Posterior vena cava (tissue), 2 donors: ENCODE measurements at regions of chrX and their contacts with region 1.

Region 1: DNA sequence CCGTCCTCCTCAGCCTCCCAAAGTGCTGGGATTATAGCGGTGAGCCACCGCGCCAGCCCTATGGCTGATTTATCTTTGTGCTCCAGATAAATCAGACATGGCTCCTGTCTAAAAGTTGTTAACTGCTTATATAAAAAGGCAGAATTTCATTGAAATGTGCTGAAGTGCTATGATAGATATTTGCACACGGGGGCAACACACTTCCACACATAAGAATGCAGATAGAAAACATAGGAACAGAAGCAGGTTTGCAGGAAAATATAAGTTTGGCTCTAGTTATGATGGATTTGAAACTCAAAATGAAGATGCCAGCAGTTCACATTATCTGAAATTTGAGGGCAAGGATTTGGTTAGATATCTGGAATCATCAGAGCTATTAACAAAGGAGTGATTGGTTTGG is 163.1 kb upstream of the SLITRK2 start:
- DNase-seq: no peak

Region 2: DNA sequence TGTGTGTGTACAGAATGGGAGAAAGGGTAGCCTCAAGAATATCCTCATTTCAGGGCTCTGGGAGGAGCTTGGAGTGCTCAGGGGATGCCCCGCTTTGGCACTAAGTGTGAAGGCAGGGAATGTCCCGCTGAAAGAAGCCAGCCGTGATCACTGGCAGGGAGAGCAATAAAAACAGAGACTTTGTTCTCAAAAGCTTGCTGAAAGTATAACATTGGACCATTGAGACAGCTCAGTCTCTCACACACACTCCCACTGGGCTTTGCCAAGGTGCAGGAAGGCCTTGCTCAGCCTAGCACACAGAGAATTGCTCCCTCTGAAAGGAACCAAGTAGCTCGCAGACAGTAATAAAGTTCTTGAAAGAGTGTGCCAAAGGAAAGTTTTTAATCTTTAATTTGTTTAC is 19.4 kb after region 1 on chrX:
- intact Hi-C with region 1: loop called in 1 of 2 experiments (anchors 1 kb)
- DNase-seq: no peak

Region 3: DNA sequence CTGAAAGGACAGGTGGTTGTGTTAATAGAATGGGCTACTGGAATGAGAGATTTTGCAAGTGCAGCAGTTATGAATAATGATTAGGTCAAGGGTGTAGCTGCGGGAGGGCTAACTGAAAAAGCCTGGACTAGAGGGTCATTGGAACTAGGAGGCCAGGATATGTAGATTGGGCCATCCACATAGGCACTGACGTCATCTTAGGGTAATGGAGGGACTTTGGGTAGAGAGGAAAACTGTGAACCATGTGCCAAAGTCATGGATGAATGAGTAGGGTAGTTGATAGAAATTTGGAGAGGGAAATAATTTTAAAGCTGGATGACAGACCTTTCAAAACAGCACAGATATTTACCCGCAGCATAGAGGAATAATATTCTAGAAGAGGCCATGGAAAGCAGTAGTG is 39.6 kb after region 1 on chrX:
- intact Hi-C with region 1: no loop called
- DNase-seq: no peak

Region 4: DNA sequence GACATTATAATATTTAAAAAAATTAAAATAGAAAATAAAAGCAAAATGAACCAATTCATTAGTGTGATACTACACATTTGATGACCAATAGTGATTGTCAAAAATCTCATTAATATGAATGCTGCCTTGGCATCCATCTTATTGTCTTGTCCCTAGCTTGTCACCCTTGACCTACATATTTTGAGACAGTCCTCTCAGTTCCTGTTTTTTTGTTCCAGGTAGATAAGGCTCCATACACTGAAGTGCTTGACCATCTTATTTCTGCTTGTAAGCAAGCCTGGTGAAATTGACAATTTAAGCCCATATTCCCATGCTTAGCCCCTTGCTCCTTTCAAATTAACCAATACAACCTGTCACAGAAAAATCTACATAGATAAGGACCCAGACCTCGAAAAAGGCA is 1723.2 kb after region 1 on chrX:
- intact Hi-C with region 1: no loop called
- DNase-seq: no peak